BJ (cell line): ENCODE measurements at regions of chrX and their contacts with region 1.

Region 1: DNA sequence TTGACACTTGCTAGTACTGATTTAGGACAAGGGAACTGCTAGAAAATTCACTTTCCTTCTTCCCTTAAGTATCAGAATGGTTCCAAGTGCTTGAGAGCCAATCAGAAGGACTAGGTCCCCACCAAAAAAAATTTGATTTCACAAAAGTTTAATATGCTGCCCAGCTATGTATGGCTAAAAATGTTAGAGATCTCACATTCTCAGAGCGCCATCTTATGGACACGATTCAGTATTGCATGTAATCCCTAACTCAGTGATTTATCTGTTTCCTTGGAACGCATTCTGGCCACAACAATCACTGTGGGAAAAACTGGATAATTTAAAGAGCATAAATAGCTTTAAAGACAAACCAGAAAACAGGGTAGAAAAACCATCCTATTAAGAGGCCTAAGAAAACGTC is 255.1 kb upstream of the GPC4 start:
- DNase-seq: no peak
- H3K4me3 ChIP-seq: no peak overlapping the region
- H3K27me3 ChIP-seq: no peaks in the 10 kb centered on the region
- CTCF ChIP-seq: peak; percentile 52

Region 2: DNA sequence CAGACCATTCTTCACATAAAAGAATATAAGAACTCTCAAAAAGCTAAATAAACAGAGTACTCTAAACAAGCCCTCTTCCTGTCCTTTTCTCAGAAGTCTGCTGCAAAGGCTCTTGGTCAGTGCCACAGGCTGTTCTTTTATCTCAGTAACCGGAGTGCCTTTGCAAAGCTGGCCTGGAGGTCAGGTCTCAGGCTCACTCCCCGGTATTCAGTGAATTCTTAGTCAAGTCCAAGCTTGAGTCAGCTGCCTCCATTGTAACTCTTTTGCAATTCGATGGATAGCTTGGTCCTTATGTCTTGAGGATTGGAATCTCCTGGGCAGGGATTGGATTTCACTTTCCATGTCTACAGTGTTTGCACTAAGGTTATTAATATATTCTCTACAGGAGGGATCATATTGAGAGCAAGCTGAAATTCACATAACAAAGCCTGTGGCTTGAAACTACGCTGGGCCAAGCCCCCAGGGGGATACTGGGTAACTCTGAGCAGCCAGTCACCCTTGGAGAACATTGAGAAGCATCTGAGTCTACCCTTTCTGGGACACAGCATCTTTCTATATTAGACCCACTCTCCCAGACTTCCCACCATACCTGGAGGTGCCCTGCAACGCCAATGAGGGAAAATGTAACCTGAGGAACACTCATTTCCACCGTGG is 702.0 kb before region 1 on chrX:
- CTCF ChIA-PET with region 1: interaction called, 15 read pairs
- POLR2A ChIA-PET with region 1: no interaction called
- DNase-seq: no peak
- H3K4me3 ChIP-seq: no peak overlapping the region
- H3K27me3 ChIP-seq: no peaks in the 10 kb centered on the region
- CTCF ChIP-seq: no peak

Region 3: GRCh38 chrX:133335027-133335426 is 335.4 kb before region 1 on chrX:
- CTCF ChIA-PET with region 1: interaction called, 12 read pairs
- POLR2A ChIA-PET with region 1: no interaction called
- DNase-seq: no peak
- H3K4me3 ChIP-seq: no peak overlapping the region
- H3K27me3 ChIP-seq: no peaks in the 10 kb centered on the region
- CTCF ChIP-seq: peak; percentile 52